ENCODE measurements at regions of chr1 and their contacts with region 1.

Region 1: GRCh38 chr1:41322835-41323627 is 38.2 kb upstream of the FOXO6 start:
- DNase-seq: peak; percentile 75
- ATAC-seq: peak; percentile 95
- H3K4me3 Mint-ChIP-seq: no peak overlapping the region
- H3K27ac Mint-ChIP-seq: no peak overlapping the region
- H3K4me1 Mint-ChIP-seq: peaks cover 11% of the 10 kb centered on the region
- H3K27me3 Mint-ChIP-seq: no peaks in the 10 kb centered on the region
- CTCF ChIP-seq: peak; percentile 49

Region 2: GRCh38 chr1:40078512-40079333 is 1244.3 kb before region 1 on chr1:
- CTCF ChIA-PET with region 1: no interaction called
- POLR2A ChIA-PET with region 1: no interaction called
- DNase-seq: peak; percentile 59
- ATAC-seq: peak; percentile 94
- H3K4me3 Mint-ChIP-seq: no peak overlapping the region
- H3K27ac Mint-ChIP-seq: no peak overlapping the region
- H3K4me1 Mint-ChIP-seq: no peaks in the 10 kb centered on the region
- H3K27me3 Mint-ChIP-seq: no peaks in the 10 kb centered on the region
- CTCF ChIP-seq: peak; percentile 45; the same call in 1 of the 2 replicates

Region 3: GRCh38 chr1:41192456-41193178 is 130.4 kb before region 1 on chr1:
- CTCF ChIA-PET with region 1: no interaction called
- POLR2A ChIA-PET with region 1: no interaction called
- DNase-seq: no peak
- ATAC-seq: no peak
- H3K4me3 Mint-ChIP-seq: no peak overlapping the region
- H3K27ac Mint-ChIP-seq: no peak overlapping the region
- H3K4me1 Mint-ChIP-seq: peaks cover 9% of the 10 kb centered on the region; the same call in 1 of the 2 replicates
- H3K27me3 Mint-ChIP-seq: no peaks in the 10 kb centered on the region
- CTCF ChIP-seq: no peak

Region 4: DNA sequence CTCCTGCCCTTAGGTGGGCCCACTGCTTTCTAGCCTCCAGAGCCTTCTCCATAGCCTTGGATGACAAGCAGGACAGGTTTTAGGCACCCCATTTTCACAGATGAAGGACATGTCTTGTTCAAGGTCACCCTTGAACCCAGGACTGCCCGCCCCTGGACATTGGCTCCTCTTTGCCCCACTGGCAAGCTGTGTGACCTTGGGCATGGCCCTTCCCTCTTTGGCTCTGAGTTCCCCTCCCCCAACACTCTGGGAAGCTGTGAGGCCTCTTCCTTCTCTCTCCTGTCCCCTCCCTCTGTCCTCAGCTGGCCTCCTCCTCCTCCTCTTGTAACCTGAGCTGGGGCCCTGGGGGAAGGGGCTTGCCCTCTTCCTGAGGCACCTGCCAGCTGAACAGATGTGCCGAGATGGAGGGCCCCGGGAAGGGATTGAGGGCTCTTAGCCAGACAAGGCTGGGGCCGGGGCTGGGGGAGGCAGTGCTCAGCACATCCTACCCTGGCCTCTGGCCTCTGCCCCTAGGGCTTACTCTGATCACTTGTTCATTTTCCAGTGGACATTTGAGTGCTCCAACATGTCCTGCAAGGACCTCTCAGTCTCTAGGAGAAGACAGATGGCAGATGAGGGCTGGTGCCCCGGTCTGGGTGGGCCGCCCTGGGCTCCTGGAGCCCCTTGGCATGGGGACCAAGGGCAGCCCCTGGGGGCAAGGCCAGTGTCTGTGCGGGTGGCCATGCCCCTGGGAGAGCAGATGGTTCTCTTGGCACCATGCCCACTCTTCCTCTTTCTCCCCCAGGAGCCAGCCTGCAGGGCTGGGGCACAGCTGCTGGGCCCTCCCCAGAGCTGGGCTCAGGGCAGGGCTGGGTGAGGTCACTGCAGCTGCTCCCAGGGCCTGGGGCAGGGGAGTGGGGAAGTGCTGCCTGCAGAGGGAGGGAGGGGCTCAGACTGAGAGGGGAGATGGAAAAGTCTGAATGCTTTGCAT is 48.9 kb after region 1 on chr1:
- CTCF ChIA-PET with region 1: interaction called, 10 read pairs
- POLR2A ChIA-PET with region 1: no interaction called
- DNase-seq: peak; percentile 87
- ATAC-seq: peak; percentile 91
- H3K4me3 Mint-ChIP-seq: peak overlapping the region; percentile 62
- H3K27ac Mint-ChIP-seq: peak overlapping the region; percentile 85; the same call in 1 of the 2 replicates
- H3K4me1 Mint-ChIP-seq: peaks cover 68% of the 10 kb centered on the region
- H3K27me3 Mint-ChIP-seq: peaks cover 31% of the 10 kb centered on the region
- CTCF ChIP-seq: no peak

Region 5: GRCh38 chr1:41416552-41417334 is 93.7 kb after region 1 on chr1:
- CTCF ChIA-PET with region 1: interaction called, 216 read pairs
- POLR2A ChIA-PET with region 1: interaction called, 5 read pairs
- DNase-seq: peak; percentile 82
- ATAC-seq: peak; percentile 86
- H3K4me3 Mint-ChIP-seq: no peak overlapping the region
- H3K27ac Mint-ChIP-seq: no peak overlapping the region
- H3K4me1 Mint-ChIP-seq: peaks cover 15% of the 10 kb centered on the region
- H3K27me3 Mint-ChIP-seq: peaks cover 3% of the 10 kb centered on the region; the same call in 1 of the 2 replicates
- CTCF ChIP-seq: peak; percentile 76

Region 6: DNA sequence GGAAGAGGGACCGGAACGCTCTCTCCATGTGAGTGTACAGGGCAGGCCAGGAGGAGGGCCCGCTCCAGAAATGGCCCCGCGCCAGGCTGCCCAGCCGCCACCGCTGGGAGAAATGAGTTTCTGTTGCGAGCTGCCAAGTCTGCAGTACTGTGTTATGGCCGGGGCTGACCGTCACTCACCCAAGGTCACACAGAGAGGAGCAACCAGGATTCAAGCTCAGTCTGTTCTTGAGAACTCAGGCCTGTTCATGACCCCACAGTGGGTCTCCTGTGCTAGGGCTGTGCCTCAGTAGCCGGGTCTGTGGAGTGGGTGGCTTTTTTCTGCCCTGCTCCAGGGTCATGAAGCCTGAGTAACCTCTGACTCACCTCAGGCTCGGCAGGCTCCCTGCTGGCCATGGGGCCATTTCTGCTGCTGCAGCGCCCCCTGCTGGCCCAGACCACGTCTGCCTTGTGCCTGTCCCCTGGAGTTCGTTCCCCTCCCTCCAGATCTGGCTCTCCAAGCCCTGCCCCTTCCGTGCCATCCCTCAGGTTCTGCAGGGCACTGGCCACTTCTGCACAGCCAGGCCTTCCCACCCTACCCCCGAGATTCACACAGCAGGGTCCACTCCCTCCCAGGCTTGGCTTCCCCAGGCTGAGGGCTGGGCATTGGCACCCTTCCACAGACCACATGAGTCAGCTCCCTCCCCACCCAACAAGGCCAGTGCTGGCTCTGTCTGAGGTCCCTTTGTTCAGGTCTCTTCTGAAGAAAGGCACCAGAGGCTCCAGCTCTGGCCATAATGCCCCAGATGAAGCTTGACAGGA is 109.7 kb after region 1 on chr1:
- CTCF ChIA-PET with region 1: interaction called, 59 read pairs
- POLR2A ChIA-PET with region 1: no interaction called
- DNase-seq: peak; percentile 94
- ATAC-seq: peak; percentile 85
- H3K4me3 Mint-ChIP-seq: no peak overlapping the region
- H3K27ac Mint-ChIP-seq: no peak overlapping the region
- H3K4me1 Mint-ChIP-seq: peaks cover 33% of the 10 kb centered on the region
- H3K27me3 Mint-ChIP-seq: peaks cover 3% of the 10 kb centered on the region; the same call in 1 of the 2 replicates
- CTCF ChIP-seq: peak; percentile 98

Measured in WTC11 (cell line).